ENCODE measurements at regions of chr3 and their contacts with region 1.

Region 1: DNA sequence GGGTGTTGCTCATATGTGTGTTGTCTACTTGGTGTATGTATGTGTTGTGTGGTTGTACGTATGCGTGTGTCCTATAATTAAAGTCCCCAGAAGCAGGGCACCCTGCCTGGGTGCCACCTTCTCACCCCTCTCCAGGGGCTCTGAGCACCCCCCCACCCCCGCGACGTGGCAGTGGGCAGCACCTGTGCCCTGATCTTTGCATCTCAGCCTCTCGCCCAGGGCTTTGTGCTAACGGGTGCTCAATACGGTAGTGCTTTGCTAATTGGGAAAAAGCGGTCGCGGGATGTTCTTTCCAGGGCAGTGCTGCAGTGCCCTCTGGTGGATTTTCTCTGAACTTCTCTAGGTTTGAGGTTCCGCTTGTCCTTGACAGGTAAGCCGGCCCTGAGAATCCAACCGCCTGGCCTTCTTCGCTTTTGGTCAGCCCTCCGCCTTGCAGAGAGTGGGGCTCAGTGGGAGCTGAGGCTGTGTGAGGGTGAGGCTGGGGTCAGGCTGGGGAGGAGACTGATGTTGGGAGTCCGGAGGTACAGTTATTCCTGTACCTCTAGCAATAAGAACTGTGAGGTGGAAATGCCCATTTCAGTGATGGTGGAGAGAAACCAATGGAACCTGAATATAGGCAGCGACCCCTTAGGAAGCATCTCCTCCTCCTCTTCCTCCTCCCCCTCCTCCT is 17.6 kb upstream of the EPHB3 start:
- DNase-seq: peak in 2 of 4 donors; percentile 59 to 82
- ATAC-seq: peak; percentile 88
- H3K4me3 ChIP-seq: no peak overlapping the region
- H3K27ac ChIP-seq: no peak overlapping the region
- H3K4me1 ChIP-seq: peaks cover 0 to 5% of the 10 kb centered on the region in 2 donors
- H3K27me3 ChIP-seq: peaks cover 0 to 24% of the 10 kb centered on the region in 2 donors
- CTCF ChIP-seq: peak; percentile 88 to 92

Region 2: GRCh38 chr3:184371570-184372018 is 172.4 kb before region 1 on chr3:
- intact Hi-C with region 1: loop called in 1 of 2 experiments (anchors 5 kb)
- DNase-seq: peak; percentile 70 to 91 (median 83)
- ATAC-seq: peak; percentile 98
- H3K4me3 ChIP-seq: no peak overlapping the region
- H3K27ac ChIP-seq: no peak overlapping the region
- H3K4me1 ChIP-seq: peaks cover 0 to 17% of the 10 kb centered on the region in 2 donors
- H3K27me3 ChIP-seq: peaks cover 0 to 26% of the 10 kb centered on the region in 2 donors
- CTCF ChIP-seq: peak; percentile 89 to 94

Region 3: DNA sequence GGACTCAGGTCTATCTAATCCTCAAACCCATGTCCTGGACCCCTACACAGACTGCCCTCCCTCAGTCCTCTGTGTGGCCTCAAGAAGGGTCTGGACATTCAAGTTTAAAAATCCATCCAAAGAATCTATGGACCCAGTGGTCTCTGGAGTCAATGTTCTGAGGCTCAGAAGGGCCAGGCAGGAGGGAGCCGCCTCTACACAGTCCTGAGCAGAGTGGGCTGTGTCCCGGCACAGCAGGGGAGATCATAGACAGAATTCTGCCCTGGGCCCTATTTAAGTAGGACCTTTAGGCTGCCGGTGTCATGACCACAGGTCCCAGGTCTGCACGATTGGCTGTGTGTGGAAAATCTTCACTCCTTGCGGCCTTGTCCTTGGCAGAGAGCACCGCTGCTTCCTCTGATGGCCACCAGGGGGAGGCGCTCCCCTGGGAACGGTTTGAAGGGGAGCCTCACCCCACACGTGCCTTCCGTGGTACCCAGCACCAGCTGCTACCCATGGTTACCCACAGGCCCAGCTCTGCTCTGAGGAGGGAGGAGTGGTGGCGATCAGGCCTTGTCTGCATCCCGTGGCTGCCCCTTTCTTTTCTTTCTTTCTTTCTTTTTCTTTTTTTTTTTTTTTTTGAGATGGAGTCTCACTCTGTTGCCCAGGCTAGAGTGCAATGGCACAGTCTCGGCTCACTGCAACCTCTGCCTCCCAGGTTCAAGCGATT is 126.2 kb before region 1 on chr3:
- intact Hi-C with region 1: loop called in 1 of 2 experiments (anchors 5 kb)
- DNase-seq: peak; percentile 39 to 90 (median 69)
- ATAC-seq: peak; percentile 98
- H3K4me3 ChIP-seq: no peak overlapping the region
- H3K27ac ChIP-seq: no peak overlapping the region
- H3K4me1 ChIP-seq: no peaks in the 10 kb centered on the region
- H3K27me3 ChIP-seq: no peaks in the 10 kb centered on the region
- CTCF ChIP-seq: peak; percentile 79 to 85

Measured in left lung (tissue), 14 donors.